ENCODE measurements at regions of chr6 and their contacts with region 1.

Region 1: GRCh38 chr6:24774696-24775519 is at the start of gene GMNN:
- DNase-seq: peak; percentile 99
- H3K4me3 ChIP-seq: peak within 1 kb of the TSS; percentile 68 to 91 (median 80)
- H3K27ac ChIP-seq: peak within 1 kb of the TSS; percentile 92 to 99 (median 98)
- H3K4me1 ChIP-seq: peaks cover 3 to 32% (median 9%) of the 10 kb centered on the region in 4 donors
- H3K27me3 ChIP-seq: no peaks in the 10 kb centered on the region
- CTCF ChIP-seq: peak in 1 of 5 experiments; percentile 15
- EP300 ChIP-seq: no peak
- POLR2A ChIP-seq: peak; percentile 80
- total RNA-seq, gene GMNN: 8.2 to 45.7 (median 23.2) TPM

Region 2: DNA sequence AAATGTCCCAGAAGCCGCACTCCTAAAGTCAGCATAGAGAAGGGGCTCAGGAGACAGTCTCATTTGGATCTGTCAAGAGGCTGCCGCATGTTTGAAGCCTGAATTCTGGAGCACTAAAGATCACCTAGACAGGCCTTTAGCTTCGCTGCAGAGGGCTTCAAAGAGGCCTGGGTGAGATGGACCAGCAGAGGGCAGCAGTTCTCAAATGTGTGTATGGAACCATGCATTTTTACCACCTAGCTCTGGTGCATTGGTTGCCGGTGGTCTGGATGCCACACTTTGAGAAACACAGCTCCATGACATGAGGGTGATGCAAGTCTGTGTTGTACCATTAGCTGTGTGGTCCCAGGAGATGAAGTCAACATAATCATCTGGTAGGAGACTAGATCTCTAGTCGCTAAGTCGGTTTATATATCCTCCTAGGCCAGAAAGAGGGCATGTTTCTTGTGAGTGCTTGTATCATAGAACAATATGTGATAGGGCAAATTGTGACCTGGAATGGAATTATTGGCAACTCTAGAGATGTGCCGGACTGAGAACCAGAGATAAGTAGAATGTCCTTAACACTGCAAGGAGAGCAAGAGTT is 193.7 kb before region 1 on chr6:
- in situ Hi-C with region 1: loop called in 1 of 4 experiments (anchors 25 kb)
- intact Hi-C with region 1: no loop called
- DNase-seq: peak; percentile 81
- H3K4me3 ChIP-seq: no peak overlapping the region
- H3K27ac ChIP-seq: no peak overlapping the region
- H3K4me1 ChIP-seq: peaks cover 0 to 10% (median 5%) of the 10 kb centered on the region in 4 donors
- H3K27me3 ChIP-seq: no peaks in the 10 kb centered on the region
- CTCF ChIP-seq: peak; percentile 66 to 80 (median 76)
- EP300 ChIP-seq: no peak
- POLR2A ChIP-seq: no peak

Region 3: DNA sequence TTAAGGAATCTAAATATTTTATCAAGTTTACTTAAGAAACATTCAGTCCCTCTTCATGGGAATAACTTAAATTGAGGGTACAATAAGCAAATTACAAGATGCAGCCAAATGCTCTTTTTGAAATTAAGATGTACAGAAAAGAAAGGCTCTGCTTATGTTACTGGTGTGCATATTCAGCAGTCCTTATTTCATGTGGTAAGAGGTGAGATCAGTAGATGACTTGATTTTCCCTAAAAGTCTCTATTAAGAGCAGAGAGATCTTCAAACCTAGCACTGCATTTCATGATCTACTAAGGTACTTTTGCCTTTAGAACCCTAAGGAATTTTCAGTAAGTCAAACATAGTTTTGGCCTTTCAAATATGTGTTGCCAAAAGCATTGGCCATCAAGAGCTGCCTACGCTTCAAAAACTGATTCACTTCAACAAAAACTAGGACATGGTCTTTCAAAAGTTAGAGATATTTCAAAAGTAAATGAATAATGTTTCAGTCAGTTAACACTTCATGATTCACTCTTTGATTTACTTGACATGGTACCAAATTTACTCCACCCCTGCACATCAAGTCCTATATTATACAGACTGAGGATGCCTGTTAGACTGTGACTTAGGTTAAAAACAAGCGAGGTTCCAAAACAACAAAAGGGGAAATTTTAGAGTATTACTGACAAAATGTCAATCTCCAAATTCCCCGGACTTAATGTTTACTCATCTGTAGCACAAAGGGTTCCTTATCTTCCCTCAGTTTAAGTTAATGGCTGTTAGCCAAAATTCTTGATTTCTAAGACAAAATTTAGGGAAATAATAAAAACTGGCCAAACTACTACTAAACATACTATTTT is 75.2 kb before region 1 on chr6:
- in situ Hi-C with region 1: loop called in 1 of 4 experiments (anchors 10 kb)
- intact Hi-C with region 1: no loop called
- DNase-seq: no peak
- H3K4me3 ChIP-seq: no peak overlapping the region
- H3K27ac ChIP-seq: no peak overlapping the region
- H3K4me1 ChIP-seq: peaks cover 0 to 3% (median 0%) of the 10 kb centered on the region in 4 donors
- H3K27me3 ChIP-seq: no peaks in the 10 kb centered on the region
- CTCF ChIP-seq: no peak
- EP300 ChIP-seq: no peak
- POLR2A ChIP-seq: no peak

Region 4: GRCh38 chr6:24719125-24719971 is 55.6 kb before region 1 on chr6 and contains the start of gene C6orf62:
- in situ Hi-C with region 1: loop called in 1 of 4 experiments (anchors 5 kb)
- intact Hi-C with region 1: no loop called
- DNase-seq: peak; percentile 41
- H3K4me3 ChIP-seq: peak within 1 kb of the TSS; percentile 74 to 100 (median 96)
- H3K27ac ChIP-seq: peak within 1 kb of the TSS; percentile 98 to 100 (median 100)
- H3K4me1 ChIP-seq: peaks cover 21 to 54% (median 42%) of the 10 kb centered on the region in 4 donors
- H3K27me3 ChIP-seq: no peaks in the 10 kb centered on the region
- CTCF ChIP-seq: no peak
- EP300 ChIP-seq: no peak
- POLR2A ChIP-seq: peak; percentile 8
- total RNA-seq, gene C6orf62: 29.9 to 64.3 (median 40.9) TPM